Dorsolateral prefrontal cortex (tissue), 120 donors: ENCODE measurements at regions of chr1 and their contacts with region 1.

Region 1: GRCh38 chr1:155859234-155859829 is at the start of gene SYT11:
- DNase-seq: peak; percentile 90 to 97 (median 96)
- H3K4me3 ChIP-seq: peak within 1 kb of the TSS; percentile 61 to 97 (median 88)
- H3K27ac ChIP-seq: peak within 1 kb of the TSS; percentile 75 to 99 (median 98)
- H3K27me3 ChIP-seq: no peaks in the 10 kb centered on the region
- CTCF ChIP-seq: peak in 51 of 56 donors; percentile 14 to 68 (median 46)
- total RNA-seq, gene SYT11: 201 to 462 (median 357) TPM

Region 2: GRCh38 chr1:155871390-155871789 is 12.1 kb after region 1 on chr1:
- intact Hi-C with region 1: loop called in 1 of 2 experiments (anchors 1 kb)
- DNase-seq: peak; percentile 77 to 94 (median 91)
- H3K4me3 ChIP-seq: peak overlapping the region in 51 of 59 donors; percentile 6 to 52 (median 32)
- H3K27ac ChIP-seq: peak overlapping the region in 58 of 59 donors; percentile 47 to 93 (median 86)
- H3K27me3 ChIP-seq: no peaks in the 10 kb centered on the region
- CTCF ChIP-seq: peak in 2 of 56 donors; percentile 7 to 26

Region 3: GRCh38 chr1:155911156-155912055 is 52.1 kb after region 1 on chr1 and contains the start of gene RIT1:
- intact Hi-C with region 1: loop called (anchors 2 kb)
- DNase-seq: peak; percentile 73 to 89 (median 78)
- H3K4me3 ChIP-seq: peak within 1 kb of the TSS; percentile 42 to 92 (median 79)
- H3K27ac ChIP-seq: peak within 1 kb of the TSS; percentile 76 to 97 (median 92)
- H3K27me3 ChIP-seq: no peaks in the 10 kb centered on the region
- CTCF ChIP-seq: peak in 14 of 56 donors; percentile 11 to 37 (median 20)
- total RNA-seq, gene RIT1: 13.3 to 34.9 (median 21.2) TPM

Region 4: GRCh38 chr1:155934097-155934935 is 75.0 kb after region 1 on chr1 and contains the start of gene KHDC4:
- intact Hi-C with region 1: loop called (anchors 2 kb)
- DNase-seq: peak; percentile 92 to 98 (median 96)
- H3K4me3 ChIP-seq: peak within 1 kb of the TSS; percentile 65 to 100 (median 93)
- H3K27ac ChIP-seq: peak within 1 kb of the TSS; percentile 65 to 99 (median 95)
- H3K27me3 ChIP-seq: no peaks in the 10 kb centered on the region
- CTCF ChIP-seq: peak in 49 of 56 donors; percentile 5 to 66 (median 35)
- total RNA-seq, gene KHDC4: 33.7 to 80.2 (median 50.9) TPM

Region 5: GRCh38 chr1:155978325-155978972 is 119.1 kb after region 1 on chr1 and contains the start of gene ARHGEF2:
- intact Hi-C with region 1: loop called in 1 of 2 experiments (anchors 5 kb)
- DNase-seq: peak in 8 of 10 donors; percentile 60 to 80 (median 72)
- H3K4me3 ChIP-seq: peak within 1 kb of the TSS; percentile 68 to 95 (median 86)
- H3K27ac ChIP-seq: peak within 1 kb of the TSS; percentile 87 to 100 (median 99)
- H3K27me3 ChIP-seq: no peaks in the 10 kb centered on the region
- CTCF ChIP-seq: peak in 49 of 56 donors; percentile 12 to 61 (median 43)
- total RNA-seq, gene ARHGEF2: 113 to 323 (median 165) TPM

Region 6: DNA sequence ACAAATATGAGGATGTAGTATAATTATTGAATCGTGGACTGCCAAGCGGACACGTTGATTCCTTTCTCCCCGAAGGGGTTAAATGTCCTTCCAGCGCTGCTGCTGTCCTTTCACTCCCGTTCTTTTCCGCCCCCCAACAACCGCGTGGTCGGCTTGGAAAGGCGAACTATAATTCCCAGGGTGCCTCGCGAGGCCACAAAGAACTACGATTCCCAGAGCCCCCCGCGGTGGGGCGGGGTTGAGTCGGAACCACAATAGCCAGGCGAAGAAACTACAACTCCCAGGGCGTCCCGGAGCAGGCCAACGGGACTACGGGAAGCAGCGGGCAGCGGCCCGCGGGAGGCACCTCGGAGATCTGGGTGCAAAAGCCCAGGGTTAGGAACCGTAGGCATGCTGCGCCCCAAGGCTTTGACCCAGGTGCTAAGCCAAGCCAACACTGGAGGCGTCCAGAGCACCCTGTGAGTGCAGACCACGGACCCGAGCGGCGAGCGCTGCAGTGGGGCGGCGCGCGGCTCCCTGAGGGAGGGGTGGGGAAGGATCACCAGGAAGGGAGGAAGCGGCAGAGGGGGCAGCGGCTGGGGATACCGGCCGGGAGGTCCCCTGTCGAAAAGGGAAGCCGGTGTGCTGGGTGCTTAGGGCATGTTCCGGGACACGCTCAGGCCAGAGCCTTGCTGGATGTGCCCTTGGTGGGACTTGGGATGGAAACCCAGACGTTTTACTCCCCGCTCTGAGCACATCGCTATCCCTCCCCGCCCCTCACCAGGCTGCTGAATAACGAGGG is 195.4 kb after region 1 on chr1 and contains the start of gene LAMTOR2:
- intact Hi-C with region 1: loop called in 1 of 2 experiments (anchors 5 kb)
- DNase-seq: peak; percentile 98 to 99 (median 98)
- H3K4me3 ChIP-seq: peak within 1 kb of the TSS; percentile 63 to 99 (median 93)
- H3K27ac ChIP-seq: peak within 1 kb of the TSS; percentile 68 to 98 (median 95)
- H3K27me3 ChIP-seq: no peaks in the 10 kb centered on the region
- CTCF ChIP-seq: peak in 44 of 56 donors; percentile 10 to 55 (median 32)
- total RNA-seq, gene LAMTOR2: 26.8 to 59.6 (median 43.5) TPM